Activated T-helper 1 cell treated with anti-CD3 and anti-CD28 coated beads, Interleukin-12 subunit alpha, Interleukin-12 subunit beta, Interleukin-2, Interleukin-4 antibody, amounts not matched to agents 30 ng/mL and 10 ng/mL and 1 ng/mL, durations not matched to agents 14 hours and 24 hours and 36 hours (primary cell): ENCODE measurements at regions of chr1 and their contacts with region 1.

Region 1: DNA sequence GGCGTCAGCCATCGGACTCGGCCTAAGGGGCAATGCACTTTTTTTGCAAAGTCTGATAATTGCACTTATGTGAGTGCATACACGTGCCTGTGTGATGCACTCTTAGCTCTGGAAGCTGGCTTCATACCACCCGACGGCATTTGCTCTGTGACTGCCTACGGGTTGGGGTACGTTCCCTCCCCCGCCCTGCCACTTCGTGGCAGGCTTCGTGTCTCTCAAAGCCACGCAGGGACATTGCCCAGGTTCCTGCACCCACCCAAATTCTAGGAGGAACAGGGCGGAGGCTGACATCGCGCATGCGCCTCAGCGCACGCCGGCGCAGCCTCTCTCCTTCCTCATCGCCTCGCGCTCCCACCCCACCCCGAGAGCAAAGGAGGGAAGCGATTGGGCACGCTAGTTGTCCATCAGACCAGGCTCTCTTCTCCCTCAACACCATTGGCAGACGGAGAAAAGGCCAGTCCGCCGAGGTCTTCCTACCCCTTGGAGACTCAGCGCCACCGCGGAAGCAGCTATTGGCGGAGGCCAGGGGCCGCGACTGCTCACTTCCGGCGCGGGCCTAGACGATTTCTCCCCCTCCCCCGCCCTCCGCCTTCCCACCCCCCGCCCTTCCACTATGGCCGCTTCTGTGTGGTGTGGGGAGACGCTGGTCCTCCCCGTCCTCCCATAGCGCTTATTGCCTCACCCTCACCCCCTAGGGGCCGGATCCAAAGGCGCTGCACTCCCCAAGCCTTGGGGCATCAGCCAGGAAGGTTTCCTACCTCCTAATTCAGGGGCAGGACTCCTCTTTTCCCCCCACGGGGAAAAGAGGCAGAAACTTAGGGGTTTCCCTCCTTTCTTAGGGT is at the start of gene INTS3:
- DNase-seq: peak; percentile 99
- H3K4me3 Mint-ChIP-seq: peak within 1 kb of the TSS; percentile 90
- H3K27ac Mint-ChIP-seq: peak within 1 kb of the TSS; percentile 91
- H3K4me1 Mint-ChIP-seq: peaks cover 35% of the 10 kb centered on the region
- H3K27me3 Mint-ChIP-seq: no peaks in the 10 kb centered on the region
- total RNA-seq, gene INTS3: 57.0 and 57.3 TPM in 2 replicates

Region 2: GRCh38 chr1:153465811-153466636 is 261.7 kb before region 1 on chr1:
- intact Hi-C with region 1: no loop called
- DNase-seq: peak; percentile 42
- H3K4me3 Mint-ChIP-seq: no peak overlapping the region
- H3K27ac Mint-ChIP-seq: no peak overlapping the region
- H3K4me1 Mint-ChIP-seq: peaks cover 5% of the 10 kb centered on the region
- H3K27me3 Mint-ChIP-seq: peaks cover 26% of the 10 kb centered on the region

Region 3: DNA sequence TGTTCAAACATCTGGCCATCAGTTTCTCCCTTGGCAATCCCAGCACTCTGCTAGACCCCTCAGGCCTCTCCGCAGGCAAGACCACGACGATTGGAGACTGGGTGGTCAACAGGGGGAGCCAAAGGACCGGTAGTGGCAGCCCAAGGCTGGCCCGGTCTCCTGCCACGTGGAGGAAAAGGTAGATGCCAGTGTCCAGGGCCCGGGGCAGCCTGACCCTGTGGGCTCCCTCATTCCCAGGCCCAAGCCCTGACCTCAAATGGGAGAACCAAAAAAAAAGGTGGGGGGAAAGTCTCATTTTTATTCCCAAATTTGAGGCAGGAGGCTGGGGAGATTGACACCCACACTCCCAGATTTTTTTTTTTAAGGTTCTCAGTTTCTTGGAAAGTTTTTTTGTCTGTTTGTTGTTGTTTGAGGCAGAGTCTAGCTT is 216.7 kb before region 1 on chr1:
- intact Hi-C with region 1: loop called (anchors 1 kb)
- DNase-seq: peak; percentile 65
- H3K4me3 Mint-ChIP-seq: no peak overlapping the region
- H3K27ac Mint-ChIP-seq: peak overlapping the region; percentile 55
- H3K4me1 Mint-ChIP-seq: peaks cover 21% of the 10 kb centered on the region
- H3K27me3 Mint-ChIP-seq: peaks cover 2% of the 10 kb centered on the region

Region 4: DNA sequence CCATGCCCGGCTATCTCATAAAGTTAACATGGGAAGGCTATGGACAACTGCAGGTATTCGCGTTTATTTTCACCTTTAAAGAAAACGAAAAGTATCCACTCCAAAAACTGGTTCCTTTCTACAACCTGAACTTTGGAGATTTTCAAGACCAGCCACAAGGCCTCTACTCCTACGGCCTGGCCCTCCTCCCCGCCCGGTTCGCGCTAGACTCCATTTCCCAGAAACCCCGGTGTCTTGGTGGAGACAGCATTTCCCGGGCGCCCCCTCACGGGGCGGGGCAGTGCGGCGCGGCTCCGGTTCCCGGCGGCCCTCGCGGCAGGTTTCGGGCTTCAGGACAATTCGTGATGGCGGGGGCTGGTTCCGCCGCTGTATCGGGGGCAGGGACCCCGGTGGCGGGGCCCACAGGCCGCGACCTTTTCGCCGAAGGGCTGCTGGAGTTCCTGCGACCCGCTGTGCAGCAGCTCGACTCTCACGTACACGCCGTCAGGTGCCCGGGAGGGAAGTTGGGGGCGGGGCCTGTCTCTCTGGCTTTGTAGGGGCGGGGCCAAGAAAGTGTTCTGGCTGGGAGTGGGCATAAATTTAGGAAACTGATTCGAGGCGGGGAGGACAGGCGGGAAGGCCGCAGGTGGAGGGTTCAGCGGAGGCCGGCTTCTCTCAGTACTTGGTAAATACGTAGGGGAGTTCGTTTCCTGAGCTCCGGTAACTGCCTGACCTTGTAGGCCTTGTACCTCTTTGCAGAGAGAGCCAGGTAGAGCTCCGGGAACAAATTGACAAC is 69.1 kb before region 1 on chr1 and contains the start of gene SNAPIN:
- intact Hi-C with region 1: loop called (anchors 1 kb)
- DNase-seq: peak; percentile 90
- H3K4me3 Mint-ChIP-seq: peak within 1 kb of the TSS; percentile 96
- H3K27ac Mint-ChIP-seq: peak within 1 kb of the TSS; percentile 84
- H3K4me1 Mint-ChIP-seq: peaks cover 11% of the 10 kb centered on the region
- H3K27me3 Mint-ChIP-seq: no peaks in the 10 kb centered on the region
- total RNA-seq, gene SNAPIN: 31.1 and 35.4 TPM in 2 replicates

Region 5: GRCh38 chr1:153783233-153784190 is 55.8 kb after region 1 on chr1:
- intact Hi-C with region 1: loop called (anchors 1 kb)
- DNase-seq: peak; percentile 90
- H3K4me3 Mint-ChIP-seq: peak overlapping the region; percentile 88
- H3K27ac Mint-ChIP-seq: peak overlapping the region; percentile 92
- H3K4me1 Mint-ChIP-seq: no peaks in the 10 kb centered on the region
- H3K27me3 Mint-ChIP-seq: peaks cover 16% of the 10 kb centered on the region

Region 6: DNA sequence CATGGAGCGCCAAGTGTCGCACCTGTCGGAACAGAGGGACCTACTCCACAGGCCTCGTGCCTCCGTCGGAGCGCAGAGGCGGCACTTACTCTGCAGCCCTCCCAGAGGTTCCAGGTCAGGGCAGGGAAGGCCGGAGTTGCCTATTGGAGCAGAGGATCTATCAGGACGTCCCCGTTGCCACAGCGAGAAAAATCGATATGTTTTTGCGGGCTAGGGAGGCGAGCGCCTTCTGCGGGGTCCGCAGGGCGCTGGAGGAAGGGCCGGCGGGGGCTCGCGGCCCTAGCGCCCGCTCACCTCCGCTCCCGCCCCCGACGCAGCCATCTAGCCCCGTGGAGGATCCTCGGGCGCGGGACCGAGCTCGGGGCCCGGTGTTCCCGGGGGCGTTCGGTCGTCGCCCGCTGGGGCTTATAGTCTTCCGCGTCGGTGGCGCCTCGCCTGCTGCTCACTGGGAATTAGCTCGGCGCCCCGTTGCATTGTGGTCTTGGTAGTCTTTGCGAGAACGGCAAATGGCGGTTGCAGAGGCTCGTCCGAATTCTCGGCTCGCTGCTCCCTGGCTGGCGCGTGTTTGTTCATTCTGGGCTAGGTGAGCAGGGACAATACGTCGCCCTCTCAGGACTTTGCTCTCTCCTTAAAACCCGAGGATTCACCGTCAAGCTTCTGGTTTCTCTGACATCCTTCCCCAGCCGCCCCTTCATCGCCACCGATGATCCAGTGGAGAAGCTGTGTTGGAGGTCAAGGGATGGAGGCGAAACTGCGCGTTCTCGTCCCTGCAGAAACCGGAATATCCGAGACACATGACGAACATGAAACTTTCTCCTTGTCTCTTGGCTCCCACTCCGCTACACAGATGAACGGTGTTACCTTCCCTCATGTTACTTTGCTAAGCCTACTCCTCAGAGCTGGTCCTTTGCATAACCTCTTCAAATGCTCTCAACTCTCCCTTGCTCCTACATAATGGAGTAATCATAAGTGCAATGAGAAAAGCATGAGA is 249.9 kb after region 1 on chr1 and contains the start of gene JTB:
- intact Hi-C with region 1: loop called (anchors 5 kb)
- DNase-seq: peak; percentile 80
- H3K4me3 Mint-ChIP-seq: peak within 1 kb of the TSS; percentile 94
- H3K27ac Mint-ChIP-seq: peak within 1 kb of the TSS; percentile 95
- H3K4me1 Mint-ChIP-seq: peaks cover 33% of the 10 kb centered on the region
- H3K27me3 Mint-ChIP-seq: no peaks in the 10 kb centered on the region
- total RNA-seq, gene JTB: 198 and 213 TPM in 2 replicates